Activated CD8-positive, alpha-beta memory T cell treated with anti-CD3 and anti-CD28 coated beads, Interleukin-2, amount 10 ng/mL, durations not matched to agents 7 days and 5 days (primary cell): ENCODE measurements at regions of chr2 and their contacts with region 1.

Region 1: GRCh38 chr2:181104512-181105115 is 124.2 kb downstream of the UBE2E3 start:
- DNase-seq: no peak
- ATAC-seq: no peak
- H3K4me3 Mint-ChIP-seq: peak overlapping the region; percentile 20
- H3K27ac Mint-ChIP-seq: peak overlapping the region; percentile 75
- H3K4me1 Mint-ChIP-seq: peaks cover 56% of the 10 kb centered on the region
- H3K27me3 Mint-ChIP-seq: no peaks in the 10 kb centered on the region

Region 2: DNA sequence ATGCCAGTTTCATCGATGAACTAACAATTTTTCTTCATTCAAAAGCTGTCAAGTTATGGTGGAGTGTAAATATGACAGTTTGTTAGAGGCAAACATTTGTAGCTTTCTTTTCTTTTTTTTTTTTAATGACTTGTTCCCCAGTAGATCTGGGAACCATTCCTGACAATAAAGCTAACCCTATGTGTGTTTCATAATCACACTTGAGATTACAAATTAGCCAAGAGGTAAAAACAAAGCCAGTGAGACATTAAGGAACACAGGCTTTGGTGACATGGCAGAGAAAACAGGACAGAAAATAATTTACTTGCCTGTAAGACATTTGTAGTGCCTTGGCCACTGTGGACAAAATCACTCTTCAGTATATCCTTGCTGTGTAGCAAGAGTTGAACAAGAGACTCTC is 11.6 kb after region 1 on chr2:
- CTCF ChIA-PET with region 1: interaction called, 14 read pairs
- DNase-seq: no peak
- ATAC-seq: no peak
- H3K4me3 Mint-ChIP-seq: no peak overlapping the region
- H3K27ac Mint-ChIP-seq: no peak overlapping the region
- H3K4me1 Mint-ChIP-seq: peaks cover 45% of the 10 kb centered on the region
- H3K27me3 Mint-ChIP-seq: no peaks in the 10 kb centered on the region

Region 3: GRCh38 chr2:181123798-181124231 is 19.2 kb after region 1 on chr2:
- CTCF ChIA-PET with region 1: interaction called, 14 read pairs
- DNase-seq: peak; percentile 89
- ATAC-seq: peak; percentile 88
- H3K4me3 Mint-ChIP-seq: peak overlapping the region; percentile 73
- H3K27ac Mint-ChIP-seq: peak overlapping the region; percentile 92
- H3K4me1 Mint-ChIP-seq: peaks cover 72% of the 10 kb centered on the region
- H3K27me3 Mint-ChIP-seq: no peaks in the 10 kb centered on the region

Region 4: DNA sequence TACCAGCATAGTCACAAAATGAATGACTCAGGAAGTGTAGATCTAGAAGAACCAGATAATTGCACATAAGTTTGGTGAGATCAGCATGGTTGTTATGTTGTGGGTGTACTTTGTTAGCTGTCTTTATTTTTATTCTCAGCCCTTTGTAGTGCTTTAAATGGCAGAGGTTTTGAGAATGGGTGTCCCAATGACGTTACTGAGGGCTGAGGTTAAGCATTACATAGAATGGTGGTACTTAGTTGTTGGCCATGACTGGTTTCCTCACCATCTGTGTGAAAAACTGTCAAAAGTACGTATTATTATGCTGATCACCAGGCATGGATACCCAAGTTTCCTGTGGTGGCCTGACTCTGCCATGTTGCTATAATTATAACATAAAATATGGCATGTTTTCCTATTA is 41.6 kb after region 1 on chr2:
- CTCF ChIA-PET with region 1: interaction called, 11 read pairs
- DNase-seq: peak; percentile 65
- ATAC-seq: peak; percentile 59
- H3K4me3 Mint-ChIP-seq: peak overlapping the region; percentile 18
- H3K27ac Mint-ChIP-seq: peak overlapping the region; percentile 86
- H3K4me1 Mint-ChIP-seq: peaks cover 68% of the 10 kb centered on the region
- H3K27me3 Mint-ChIP-seq: no peaks in the 10 kb centered on the region

Region 5: GRCh38 chr2:181178823-181179412 is 74.3 kb after region 1 on chr2:
- CTCF ChIA-PET with region 1: interaction called, 12 read pairs
- DNase-seq: peak; percentile 83
- ATAC-seq: peak; percentile 68
- H3K4me3 Mint-ChIP-seq: peak overlapping the region; percentile 41
- H3K27ac Mint-ChIP-seq: peak overlapping the region; percentile 82
- H3K4me1 Mint-ChIP-seq: peaks cover 65% of the 10 kb centered on the region
- H3K27me3 Mint-ChIP-seq: no peaks in the 10 kb centered on the region

Region 6: GRCh38 chr2:181457121-181457740 is 352.6 kb after region 1 on chr2 and contains the start of gene ITGA4:
- CTCF ChIA-PET with region 1: interaction called, 24 read pairs
- DNase-seq: peak; percentile 92
- ATAC-seq: peak; percentile 82
- H3K4me3 Mint-ChIP-seq: peak within 1 kb of the TSS; percentile 99
- H3K27ac Mint-ChIP-seq: peak within 1 kb of the TSS; percentile 97
- H3K4me1 Mint-ChIP-seq: peaks cover 30% of the 10 kb centered on the region
- H3K27me3 Mint-ChIP-seq: no peaks in the 10 kb centered on the region
- total RNA-seq, gene ITGA4: 301 to 344 TPM

Region 7: GRCh38 chr2:181466661-181467576 is 362.3 kb after region 1 on chr2:
- CTCF ChIA-PET with region 1: interaction called, 36 read pairs
- DNase-seq: peak; percentile 90
- ATAC-seq: peak; percentile 24
- H3K4me3 Mint-ChIP-seq: peak overlapping the region; percentile 29
- H3K27ac Mint-ChIP-seq: peak overlapping the region; percentile 58
- H3K4me1 Mint-ChIP-seq: peaks cover 90% of the 10 kb centered on the region
- H3K27me3 Mint-ChIP-seq: no peaks in the 10 kb centered on the region

Region 8: GRCh38 chr2:181540410-181540809 is 435.8 kb after region 1 on chr2:
- CTCF ChIA-PET with region 1: no interaction called
- DNase-seq: no peak
- ATAC-seq: no peak
- H3K4me3 Mint-ChIP-seq: no peak overlapping the region
- H3K27ac Mint-ChIP-seq: no peak overlapping the region
- H3K4me1 Mint-ChIP-seq: no peaks in the 10 kb centered on the region
- H3K27me3 Mint-ChIP-seq: no peaks in the 10 kb centered on the region